Ascending aorta (tissue), 2 donors: ENCODE measurements at regions of chr20 and their contacts with region 1.

Region 1: DNA sequence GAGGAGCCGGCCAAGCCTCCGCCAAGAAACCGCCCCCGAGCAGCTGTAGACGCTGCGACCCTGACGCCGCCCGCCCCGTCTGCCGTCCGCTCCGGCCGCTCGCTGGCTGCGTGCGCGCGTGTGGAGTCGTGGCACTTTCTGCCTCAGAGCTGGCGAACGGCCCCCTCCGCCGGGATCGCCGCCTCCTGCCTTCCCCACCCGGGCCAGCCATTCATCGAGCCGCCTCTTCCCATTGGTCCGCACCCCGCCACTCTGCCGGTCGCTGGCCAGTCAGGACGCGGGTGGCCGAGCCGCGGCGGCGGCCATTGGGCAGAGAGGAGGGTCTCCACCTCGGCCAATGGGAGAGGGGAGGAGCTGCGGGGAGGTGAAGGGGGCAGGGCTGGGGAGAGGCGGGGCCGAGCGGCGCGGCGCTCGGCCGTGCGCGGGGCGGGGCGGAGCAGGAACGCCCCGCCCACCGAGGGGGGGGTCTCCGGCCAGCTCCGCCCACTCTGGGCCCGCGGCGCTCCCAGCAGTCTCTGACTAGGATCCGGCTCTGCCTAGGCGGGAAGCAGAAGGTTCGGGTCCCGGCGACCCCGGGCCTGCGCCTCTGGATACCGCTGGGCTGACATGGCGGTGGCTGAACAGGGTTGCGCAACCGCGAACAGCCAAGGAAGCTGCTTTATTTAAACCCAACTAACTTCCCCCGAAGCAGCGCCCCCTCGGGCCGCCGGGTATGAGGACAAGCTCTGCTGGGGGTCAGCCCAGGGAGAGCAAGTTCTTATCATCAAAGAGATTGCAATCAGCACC is at the start of gene RRBP1:
- DNase-seq: peak; percentile 97 to 99
- H3K4me3 ChIP-seq: peak within 1 kb of the TSS; percentile 90 to 93
- H3K27ac ChIP-seq: peak within 1 kb of the TSS; percentile 95 to 97
- H3K4me1 ChIP-seq: peaks cover 4 to 12% of the 10 kb centered on the region in 2 donors
- H3K27me3 ChIP-seq: no peaks in the 10 kb centered on the region
- CTCF ChIP-seq: peak; percentile 60 to 77 (median 76)
- total RNA-seq, gene RRBP1: 101 TPM

Region 2: GRCh38 chr20:16573001-16573965 is 1109.0 kb before region 1 on chr20 and contains the start of gene KIF16B:
- intact Hi-C with region 1: loop called (anchors 10 kb)
- DNase-seq: peak; percentile 46 to 96
- H3K4me3 ChIP-seq: peak within 1 kb of the TSS; percentile 74 to 90
- H3K27ac ChIP-seq: peak within 1 kb of the TSS; percentile 74 to 75
- H3K4me1 ChIP-seq: peaks cover 0 to 4% of the 10 kb centered on the region in 2 donors
- H3K27me3 ChIP-seq: no peaks in the 10 kb centered on the region
- CTCF ChIP-seq: peak in 2 of 3 experiments; percentile 4 to 31
- total RNA-seq, gene KIF16B: 6.3 TPM

Region 3: DNA sequence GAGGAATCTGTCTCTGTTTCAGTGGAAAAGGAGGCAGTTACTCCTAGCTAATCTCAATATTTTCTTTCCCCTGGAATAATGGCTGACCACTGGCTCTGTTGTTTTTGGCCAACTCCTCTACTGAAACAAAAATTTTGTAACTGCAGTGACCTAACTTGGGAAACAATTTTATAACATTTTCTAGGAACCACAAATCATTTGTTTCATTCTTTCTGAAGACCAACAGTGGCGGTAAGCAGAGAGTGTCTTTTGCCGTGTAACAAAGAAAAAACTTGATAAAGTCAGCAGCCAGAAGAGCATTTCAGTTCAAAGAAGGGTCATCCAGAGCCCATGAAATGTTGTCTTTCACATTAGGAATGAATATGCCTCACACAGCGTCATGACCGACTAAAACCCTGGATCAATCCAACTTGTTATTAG is 139.3 kb before region 1 on chr20:
- intact Hi-C with region 1: loop called (anchors 2 kb)
- DNase-seq: no peak
- H3K4me3 ChIP-seq: peak overlapping the region in 1 of 2 donors; percentile 10
- H3K27ac ChIP-seq: peak overlapping the region; percentile 69 to 86
- H3K4me1 ChIP-seq: peaks cover 18 to 41% of the 10 kb centered on the region in 2 donors
- H3K27me3 ChIP-seq: no peaks in the 10 kb centered on the region
- CTCF ChIP-seq: no peak

Region 4: DNA sequence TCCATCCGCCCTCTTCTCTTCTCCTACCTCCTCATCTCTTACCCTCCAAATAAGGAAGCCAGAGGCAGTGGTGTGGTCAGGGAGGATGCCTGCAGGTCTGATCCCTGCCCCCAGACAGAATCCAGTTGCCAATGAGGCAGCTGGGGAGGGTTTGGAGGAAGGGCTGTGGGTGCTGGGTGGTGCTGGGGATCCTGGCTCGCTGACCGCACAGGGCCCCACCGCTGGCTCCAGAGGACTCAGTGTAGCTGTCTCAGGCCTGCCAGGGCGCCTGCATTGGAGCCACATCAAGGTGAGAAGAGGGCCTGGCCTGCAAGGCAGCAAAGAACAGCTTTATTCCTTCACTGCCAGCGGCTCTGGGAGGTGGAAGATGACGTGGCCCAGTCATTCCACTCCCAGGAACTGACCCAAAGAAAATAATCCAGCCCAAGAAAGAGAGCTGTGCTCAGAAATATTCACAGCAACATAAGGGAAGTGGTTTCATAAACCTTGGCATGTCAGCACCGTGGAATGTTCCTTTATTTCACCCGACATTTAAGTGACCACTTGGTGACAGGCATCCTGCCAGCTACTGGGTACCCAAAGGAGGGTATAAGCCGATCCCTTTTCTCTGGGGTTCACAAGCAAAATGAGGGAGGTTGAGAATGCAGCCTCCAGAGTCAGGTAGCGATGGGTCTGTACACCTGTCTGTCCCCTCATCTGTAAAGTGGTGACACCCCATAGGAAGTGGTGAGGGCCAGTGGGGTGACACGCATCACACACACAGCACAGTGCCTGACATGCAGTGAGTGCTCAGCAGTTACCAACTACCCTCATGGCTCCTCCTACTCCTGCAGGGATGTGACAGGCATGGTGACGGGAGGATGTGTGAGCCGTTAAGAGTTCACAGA is 161.2 kb after region 1 on chr20:
- intact Hi-C with region 1: loop called (anchors 5 kb)
- DNase-seq: peak; percentile 27 to 93
- H3K4me3 ChIP-seq: no peak overlapping the region
- H3K27ac ChIP-seq: peak overlapping the region; percentile 85 to 88
- H3K4me1 ChIP-seq: peaks cover 15 to 29% of the 10 kb centered on the region in 2 donors
- H3K27me3 ChIP-seq: no peaks in the 10 kb centered on the region
- CTCF ChIP-seq: no peak

Region 5: DNA sequence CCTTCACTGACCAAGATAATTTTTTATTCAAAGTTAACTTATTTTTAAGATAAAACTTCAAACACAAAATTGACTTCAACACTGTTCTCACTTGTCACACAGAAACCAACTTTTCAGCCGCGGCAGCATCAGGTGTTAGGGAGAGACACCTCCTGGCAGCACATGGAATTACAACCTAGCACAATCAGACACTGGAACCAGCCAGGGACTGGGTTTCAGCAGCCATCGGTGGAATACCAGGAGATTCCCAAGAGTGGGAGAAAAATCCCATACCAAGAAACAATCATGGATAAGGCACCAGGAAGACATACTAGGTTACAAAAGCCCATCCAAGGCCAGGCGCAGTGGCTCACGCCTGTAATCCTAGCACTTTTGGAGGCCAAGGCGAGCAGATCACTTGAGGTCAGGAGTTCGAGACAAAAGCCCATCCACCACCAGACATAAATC is 216.3 kb after region 1 on chr20:
- intact Hi-C with region 1: loop called (anchors 1 kb)
- DNase-seq: peak in 1 of 2 donors; percentile 86
- H3K4me3 ChIP-seq: no peak overlapping the region
- H3K27ac ChIP-seq: no peak overlapping the region
- H3K4me1 ChIP-seq: peaks cover 0 to 15% of the 10 kb centered on the region in 2 donors
- H3K27me3 ChIP-seq: no peaks in the 10 kb centered on the region
- CTCF ChIP-seq: peak; percentile 88 to 96 (median 94)

Region 6: DNA sequence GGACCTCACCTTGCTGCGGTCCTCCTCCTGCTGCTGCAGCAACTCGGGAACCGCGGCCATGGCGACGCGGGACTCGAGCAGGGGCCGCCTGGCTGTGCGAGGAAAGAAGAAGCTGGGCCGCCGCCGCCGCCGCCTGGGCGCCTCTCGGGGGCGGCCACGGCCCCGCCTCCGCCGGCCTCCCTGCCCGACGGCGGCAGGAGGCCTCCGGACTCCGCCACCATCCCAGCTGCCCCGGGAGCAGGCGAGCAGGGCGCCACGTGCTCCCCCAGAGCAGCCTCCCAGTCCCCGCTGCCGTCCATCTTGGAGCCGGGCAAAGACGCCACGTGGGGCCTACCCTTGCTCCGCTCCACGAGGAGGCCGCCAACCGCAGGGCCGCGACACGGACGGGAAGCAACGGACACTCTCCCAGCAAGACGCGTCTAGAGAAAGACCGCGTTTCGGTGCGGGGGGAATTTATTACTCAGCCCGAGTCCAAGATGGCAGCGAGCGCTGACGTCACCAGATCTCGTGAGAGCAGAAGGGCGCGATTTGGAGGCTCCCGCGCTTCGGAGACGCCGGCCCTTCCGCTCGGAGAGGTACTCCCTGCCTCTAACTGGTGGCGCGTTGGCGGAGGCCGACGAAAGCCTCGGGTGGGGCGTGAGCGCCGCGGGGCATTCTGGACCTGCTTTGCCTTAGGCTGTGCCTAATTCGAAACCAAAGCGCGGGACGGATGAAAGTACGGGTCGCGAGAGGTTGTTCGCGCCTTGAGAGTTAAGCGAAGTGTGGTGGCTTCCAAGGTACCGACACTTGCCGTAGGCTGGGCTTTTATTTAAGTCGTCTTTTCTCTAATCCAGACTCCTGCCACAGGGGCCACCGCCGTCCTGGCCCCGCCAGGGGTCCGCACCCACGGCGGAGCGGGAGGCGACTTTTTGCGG is 286.3 kb after region 1 on chr20 and contains the starts of genes MGME1 and SNX5:
- intact Hi-C with region 1: loop called (anchors 2 kb)
- DNase-seq: peak; percentile 99 to 100
- H3K4me3 ChIP-seq: peak within 1 kb of the TSS; percentile 79 to 84
- H3K27ac ChIP-seq: peak within 1 kb of the TSS; percentile 94 to 96
- H3K4me1 ChIP-seq: peaks cover 4 to 31% of the 10 kb centered on the region in 2 donors
- H3K27me3 ChIP-seq: no peaks in the 10 kb centered on the region
- CTCF ChIP-seq: no peak
- total RNA-seq, gene MGME1: 0.85 TPM
- total RNA-seq, gene SNX5: 32.7 TPM

Region 7: GRCh38 chr20:18566892-18567742 is 884.8 kb after region 1 on chr20 and contains the start of gene SMIM26:
- intact Hi-C with region 1: loop called (anchors 10 kb)
- DNase-seq: peak; percentile 43 to 96
- H3K4me3 ChIP-seq: peak within 1 kb of the TSS; percentile 73 to 86
- H3K27ac ChIP-seq: peak within 1 kb of the TSS; percentile 80 to 93
- H3K4me1 ChIP-seq: peaks cover 0 to 10% of the 10 kb centered on the region in 2 donors
- H3K27me3 ChIP-seq: no peaks in the 10 kb centered on the region
- CTCF ChIP-seq: no peak
- total RNA-seq, gene SMIM26: 67.7 TPM